ENCODE measurements at regions of chr3 and their contacts with region 1.

Region 1: GRCh38 chr3:183188895-183189462 is 26.4 kb upstream of the LAMP3 start:
- DNase-seq: no peak
- H3K4me3 Mint-ChIP-seq: no peak overlapping the region
- H3K27ac Mint-ChIP-seq: no peak overlapping the region
- H3K4me1 Mint-ChIP-seq: peaks cover 16% of the 10 kb centered on the region
- H3K27me3 Mint-ChIP-seq: no peaks in the 10 kb centered on the region

Region 2: DNA sequence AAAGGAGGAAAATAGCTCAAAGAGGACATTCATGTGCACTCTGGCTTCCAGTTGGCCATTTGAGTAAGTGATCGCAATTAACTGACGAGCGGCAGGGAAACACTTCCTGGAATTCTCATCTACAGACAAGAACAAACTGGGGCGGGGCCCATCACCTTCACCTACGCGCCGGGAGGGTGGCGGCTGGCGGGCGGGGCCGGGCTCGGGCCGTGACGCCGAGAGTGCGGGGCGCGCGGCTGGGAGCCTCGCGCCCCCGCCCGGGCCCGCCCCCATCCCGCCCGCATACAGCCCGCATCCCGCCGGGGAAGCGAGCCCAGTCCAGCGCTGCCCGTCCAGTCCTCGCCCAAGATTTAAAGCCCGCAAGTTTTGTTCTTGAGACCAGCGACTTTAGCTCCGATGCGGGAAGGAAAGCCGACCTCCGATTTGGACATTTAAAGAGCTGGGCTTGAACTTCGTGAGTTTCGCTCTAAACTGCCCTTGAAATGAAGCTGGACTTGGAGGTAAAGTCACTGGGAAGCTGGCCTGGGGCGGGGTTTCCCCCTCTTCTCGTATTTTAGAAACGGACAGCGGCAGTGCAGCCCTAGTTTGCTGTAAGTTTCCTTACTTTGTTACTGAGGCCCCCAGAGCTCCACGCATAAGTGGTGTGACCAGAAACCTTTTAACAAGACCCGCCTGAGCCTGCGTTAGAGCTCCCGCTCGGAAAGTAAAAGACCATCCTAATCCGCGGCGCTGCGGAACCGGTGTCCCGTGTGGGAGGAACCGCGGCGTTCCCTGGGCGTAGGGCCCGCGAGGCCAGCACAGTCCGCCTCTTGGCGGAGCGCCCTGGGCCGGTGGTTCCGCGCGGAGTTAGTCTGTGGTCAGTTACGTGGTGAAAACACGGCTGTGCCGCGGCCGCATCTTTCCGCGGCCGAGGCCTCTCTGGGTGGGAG is 64.3 kb after region 1 on chr3 and contains the start of gene B3GNT5:
- intact Hi-C with region 1: loop called (anchors 5 kb)
- DNase-seq: no peak
- H3K4me3 Mint-ChIP-seq: peak within 1 kb of the TSS; percentile 85
- H3K27ac Mint-ChIP-seq: peak within 1 kb of the TSS; percentile 76
- H3K4me1 Mint-ChIP-seq: peaks cover 23% of the 10 kb centered on the region
- H3K27me3 Mint-ChIP-seq: no peaks in the 10 kb centered on the region
- total RNA-seq, gene B3GNT5: 41.0 and 41.7 TPM in 2 replicates

Region 3: GRCh38 chr3:183597959-183598358 is 409.0 kb after region 1 on chr3:
- intact Hi-C with region 1: no loop called
- DNase-seq: no peak
- H3K4me3 Mint-ChIP-seq: no peak overlapping the region
- H3K27ac Mint-ChIP-seq: no peak overlapping the region
- H3K4me1 Mint-ChIP-seq: peaks cover 3% of the 10 kb centered on the region
- H3K27me3 Mint-ChIP-seq: no peaks in the 10 kb centered on the region